Activated CD4-positive, alpha-beta memory T cell treated with anti-CD3 and anti-CD28 coated beads for 36 hours (primary cell): ENCODE measurements at regions of chr12 and their contacts with region 1.

Region 1: DNA sequence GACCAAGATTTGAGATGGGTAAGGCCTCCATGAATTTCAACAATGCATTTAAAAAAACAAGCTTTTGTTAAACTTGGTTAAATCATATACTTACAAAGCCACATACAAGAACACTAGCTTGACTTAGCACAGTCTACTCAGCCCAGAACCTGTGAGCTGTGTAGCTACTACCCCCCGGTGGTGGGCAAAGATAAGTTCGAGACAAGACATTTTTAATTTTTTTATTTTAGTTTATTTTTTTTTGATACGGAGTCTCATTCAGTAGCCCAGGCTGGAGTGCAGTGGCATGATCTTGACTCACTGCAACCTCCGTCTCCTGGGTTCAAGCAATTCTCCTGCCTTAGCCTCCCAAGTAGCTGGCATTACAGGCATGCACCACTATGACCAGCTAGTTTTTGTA is 3.7 kb upstream of the NECAP1 start:
- DNase-seq: peak; percentile 75
- H3K4me3 Mint-ChIP-seq: no peak overlapping the region
- H3K27ac Mint-ChIP-seq: peak overlapping the region; percentile 57
- H3K4me1 Mint-ChIP-seq: peaks cover 45% of the 10 kb centered on the region
- H3K27me3 Mint-ChIP-seq: no peaks in the 10 kb centered on the region

Region 2: DNA sequence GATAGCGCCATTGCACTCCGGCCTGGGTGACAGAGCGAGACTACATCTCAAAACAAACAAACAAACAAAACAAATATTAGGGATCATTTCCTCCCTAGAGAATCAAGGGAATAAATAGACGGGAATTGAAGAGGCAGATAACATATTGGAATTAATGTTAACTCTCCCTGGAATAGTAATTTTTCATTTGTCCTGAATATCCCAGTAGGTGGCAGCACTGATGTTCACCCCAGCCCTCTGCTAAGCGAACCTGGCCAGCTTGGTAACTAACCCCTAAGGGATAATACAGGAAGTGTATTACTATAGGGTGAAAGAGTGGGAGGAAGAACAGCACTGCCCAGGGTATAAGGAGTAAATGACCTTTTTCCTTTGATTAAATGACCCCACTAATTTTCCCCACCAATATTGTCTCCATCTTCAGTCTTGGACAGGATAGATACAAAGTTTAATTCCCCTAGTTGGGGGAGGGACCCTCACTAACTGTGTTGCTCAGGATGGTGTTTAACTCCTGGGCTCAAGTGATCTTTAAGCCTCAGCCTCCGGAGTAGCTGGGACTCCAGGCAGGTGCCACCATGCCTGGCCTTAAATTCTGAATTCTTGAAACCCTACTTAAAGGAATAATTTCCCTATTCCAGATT is 246.2 kb before region 1 on chr12:
- CTCF ChIA-PET with region 1: interaction called, 18 read pairs
- POLR2A ChIA-PET with region 1: no interaction called
- intact Hi-C with region 1: no loop called
- DNase-seq: peak; percentile 27
- H3K4me3 Mint-ChIP-seq: no peak overlapping the region
- H3K27ac Mint-ChIP-seq: no peak overlapping the region
- H3K4me1 Mint-ChIP-seq: no peaks in the 10 kb centered on the region
- H3K27me3 Mint-ChIP-seq: no peaks in the 10 kb centered on the region

Region 3: DNA sequence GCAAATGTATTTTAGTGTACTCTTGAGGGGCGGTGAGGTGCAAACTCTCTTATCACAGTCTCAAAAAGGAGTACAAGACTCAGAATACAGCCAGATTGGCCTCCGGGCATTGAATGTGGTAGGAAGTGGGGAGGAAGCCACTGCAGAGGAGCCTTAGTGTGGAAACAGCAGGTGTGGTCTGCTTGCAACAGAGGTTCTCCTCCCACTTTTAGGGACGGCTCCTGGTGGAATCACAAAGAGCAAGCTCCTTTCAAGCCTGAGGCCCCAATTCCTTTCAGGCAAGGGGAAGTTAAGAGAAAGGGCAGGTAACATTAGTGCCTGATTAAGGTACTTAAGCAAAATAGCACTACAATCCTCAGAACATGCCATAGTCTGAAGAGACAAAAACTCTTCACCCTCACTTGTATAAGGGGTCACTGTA is 118.7 kb before region 1 on chr12:
- CTCF ChIA-PET with region 1: interaction called, 10 read pairs
- POLR2A ChIA-PET with region 1: no interaction called
- intact Hi-C with region 1: no loop called
- DNase-seq: peak; percentile 68
- H3K4me3 Mint-ChIP-seq: peak overlapping the region; percentile 87
- H3K27ac Mint-ChIP-seq: peak overlapping the region; percentile 94
- H3K4me1 Mint-ChIP-seq: peaks cover 33% of the 10 kb centered on the region
- H3K27me3 Mint-ChIP-seq: no peaks in the 10 kb centered on the region

Region 4: DNA sequence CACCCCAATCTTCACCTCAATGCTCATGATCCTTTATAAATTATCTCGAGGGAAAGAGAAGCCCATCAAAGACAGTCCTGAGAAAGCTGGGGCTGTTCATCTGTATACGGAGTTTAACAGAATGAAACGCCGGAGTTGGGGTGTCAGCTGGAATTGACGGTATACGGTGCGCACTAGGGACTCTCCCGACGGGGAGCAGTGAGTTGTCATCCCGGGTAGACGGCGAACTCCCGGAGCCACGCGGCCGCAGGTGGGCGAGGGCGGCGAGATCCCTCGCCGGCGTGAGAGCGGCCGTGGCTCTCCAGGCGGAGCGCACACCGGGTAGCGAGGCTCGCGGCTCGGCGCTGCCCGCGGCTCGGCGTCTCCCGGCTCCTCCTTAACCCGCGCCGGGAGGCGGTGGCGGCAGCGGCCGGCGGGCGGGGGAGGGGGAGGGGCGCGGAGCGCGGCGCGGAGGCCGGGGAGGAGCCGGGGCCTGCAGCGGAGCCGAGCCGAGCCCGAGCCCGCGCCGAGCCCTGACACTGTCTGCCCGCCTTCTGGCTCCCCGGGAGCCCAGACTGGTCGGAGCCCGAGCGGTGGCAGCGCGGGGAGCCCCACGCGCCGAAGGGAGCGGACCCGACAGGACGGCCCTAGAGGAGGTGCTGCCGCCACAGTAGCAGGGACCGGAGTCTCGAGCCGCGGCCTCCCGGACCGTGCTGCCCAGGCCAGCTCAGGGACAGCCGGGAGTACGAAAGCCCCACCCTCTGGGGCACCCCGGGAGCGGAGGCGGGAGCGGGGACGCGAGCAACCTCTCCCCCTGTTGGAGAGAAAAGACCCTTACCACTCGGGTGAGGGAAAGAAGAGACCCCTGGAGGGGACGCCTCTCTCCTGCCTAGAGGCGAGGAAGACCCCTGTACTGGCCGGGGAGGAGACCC is 45.9 kb before region 1 on chr12 and contains the start of gene FOXJ2:
- CTCF ChIA-PET with region 1: interaction called, 25 read pairs
- POLR2A ChIA-PET with region 1: interaction called, 5 read pairs
- intact Hi-C with region 1: no loop called
- DNase-seq: peak; percentile 83
- H3K4me3 Mint-ChIP-seq: peak within 1 kb of the TSS; percentile 84
- H3K27ac Mint-ChIP-seq: peak within 1 kb of the TSS; percentile 88
- H3K4me1 Mint-ChIP-seq: peaks cover 51% of the 10 kb centered on the region
- H3K27me3 Mint-ChIP-seq: no peaks in the 10 kb centered on the region
- total RNA-seq, gene FOXJ2: 16.7 to 17.1 TPM

Region 5: GRCh38 chr12:8057839-8058238 is 20.6 kb before region 1 on chr12:
- CTCF ChIA-PET with region 1: interaction called, 18 read pairs
- POLR2A ChIA-PET with region 1: no interaction called
- intact Hi-C with region 1: no loop called
- DNase-seq: no peak
- H3K4me3 Mint-ChIP-seq: no peak overlapping the region
- H3K27ac Mint-ChIP-seq: no peak overlapping the region
- H3K4me1 Mint-ChIP-seq: peaks cover 16% of the 10 kb centered on the region
- H3K27me3 Mint-ChIP-seq: no peaks in the 10 kb centered on the region

Region 6: GRCh38 chr12:8096281-8096915 is 18.0 kb after region 1 on chr12:
- CTCF ChIA-PET with region 1: no interaction called
- POLR2A ChIA-PET with region 1: no interaction called
- intact Hi-C with region 1: no loop called
- DNase-seq: no peak
- H3K4me3 Mint-ChIP-seq: no peak overlapping the region
- H3K27ac Mint-ChIP-seq: no peak overlapping the region
- H3K4me1 Mint-ChIP-seq: peaks cover 11% of the 10 kb centered on the region
- H3K27me3 Mint-ChIP-seq: no peaks in the 10 kb centered on the region